ENCODE measurements at regions of chr15 and their contacts with region 1.

Region 1: DNA sequence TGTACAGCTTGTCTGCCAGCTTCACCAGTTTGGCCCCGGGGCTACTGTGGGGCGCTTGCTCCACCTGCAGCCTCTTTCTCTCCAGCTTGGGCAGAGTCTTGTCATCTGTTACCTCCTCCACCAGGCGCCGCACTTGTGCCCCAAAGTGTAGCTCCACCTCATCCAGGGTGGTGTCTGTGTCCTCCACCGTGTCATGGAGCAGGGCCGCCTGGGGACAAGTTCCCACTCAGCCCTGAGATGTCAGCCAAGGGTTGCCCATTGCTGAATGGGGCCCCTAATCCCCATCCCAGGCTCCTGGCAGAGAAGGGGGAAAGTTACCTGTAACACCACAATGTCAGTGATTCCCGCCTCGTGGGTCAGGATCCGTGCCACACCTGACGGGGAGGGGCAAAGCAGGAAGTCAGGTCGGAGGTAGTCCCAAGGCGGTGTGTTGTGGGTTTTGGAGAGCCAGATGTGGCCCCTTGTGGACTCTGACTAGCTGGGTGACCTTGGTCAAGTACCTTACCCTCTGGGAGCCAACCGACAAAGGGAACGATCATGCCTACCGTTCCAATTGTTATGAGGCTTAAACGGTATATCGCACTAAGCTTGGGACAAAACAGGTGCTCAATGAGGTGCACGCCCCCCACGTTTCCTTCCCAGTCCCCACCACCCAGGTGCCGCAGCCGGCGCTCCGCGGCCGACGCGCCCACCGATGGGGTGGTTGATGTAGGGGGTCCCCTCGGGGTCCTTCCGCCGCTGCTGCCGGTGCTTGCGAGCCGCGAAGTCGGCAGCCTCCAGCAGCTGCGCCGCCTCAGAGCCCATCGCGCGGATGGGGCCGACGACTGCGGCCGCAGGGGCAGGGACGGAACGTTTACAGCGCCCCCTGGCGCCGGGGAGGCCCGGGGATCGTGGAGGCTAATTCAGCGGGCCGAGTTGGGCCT is at the start of gene HDDC3:
- DNase-seq: peak; percentile 90

Region 2: DNA sequence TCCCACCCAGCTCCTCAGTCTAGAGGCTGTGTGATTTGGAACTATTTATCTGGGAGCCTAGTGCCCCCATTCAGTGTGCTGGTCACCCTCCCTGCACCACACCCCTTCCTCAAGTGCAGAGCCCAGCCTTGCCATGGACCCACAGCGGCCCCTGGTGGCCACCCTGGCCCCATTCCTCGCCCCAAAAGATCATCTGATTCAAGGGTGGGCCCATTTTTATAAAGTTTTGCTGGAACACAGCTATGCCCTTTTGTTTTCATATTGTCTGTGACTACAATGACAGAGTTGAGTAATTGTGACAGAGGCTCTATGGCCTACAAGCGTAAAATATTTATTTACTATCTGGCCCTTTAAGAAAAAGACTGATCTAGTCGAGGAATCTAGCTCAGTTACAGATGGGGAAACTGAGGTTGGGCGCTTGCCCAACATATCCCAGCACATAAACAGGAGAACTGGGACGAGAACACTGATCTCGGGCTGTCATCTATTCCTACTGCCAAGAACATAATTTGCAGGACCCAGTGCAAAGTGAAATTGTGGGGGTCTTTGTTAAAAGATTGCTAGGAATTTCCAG is 45.9 kb before region 1 on chr15:
- CTCF ChIA-PET with region 1: interaction called, 12 read pairs
- POLR2A ChIA-PET with region 1: interaction called, 4 read pairs
- DNase-seq: peak; percentile 82

Region 3: DNA sequence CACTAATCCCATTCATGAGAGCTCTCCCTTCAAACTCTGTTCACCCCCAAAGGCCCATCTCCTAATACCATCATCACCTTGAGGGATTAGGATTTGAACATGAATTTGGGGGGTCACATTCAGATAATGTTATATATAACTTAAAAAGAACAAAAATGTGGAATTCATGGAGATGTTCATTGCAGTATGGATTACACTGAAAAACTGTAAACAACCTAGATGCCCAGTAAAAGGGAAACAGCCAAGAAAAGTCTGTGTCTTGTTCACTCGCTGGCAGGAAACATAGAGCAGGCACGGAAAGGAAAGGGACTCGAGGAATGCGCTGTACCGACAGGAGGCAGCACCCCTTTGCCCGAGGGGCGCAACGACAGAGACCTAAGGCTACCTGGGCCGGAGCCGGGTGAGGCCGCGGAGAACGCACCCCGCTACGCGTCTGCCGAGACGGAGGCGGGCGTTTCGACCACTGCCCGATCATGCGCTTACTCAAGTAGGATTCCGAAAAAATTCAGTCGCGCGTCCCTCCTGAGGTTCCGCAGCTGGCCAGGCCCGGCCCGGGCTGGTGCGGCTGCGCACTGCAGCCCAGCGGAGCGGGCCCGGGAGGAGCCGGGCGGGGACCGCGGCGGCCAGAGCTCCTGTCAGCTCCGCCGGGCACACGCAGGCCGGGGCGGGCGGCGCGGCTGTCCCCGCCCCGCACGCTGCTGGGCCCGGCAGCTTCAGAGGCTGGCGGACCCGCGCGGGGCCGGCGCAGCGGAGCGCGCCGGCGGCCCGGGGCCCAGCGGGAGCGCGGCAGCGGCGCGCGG is 29.8 kb before region 1 on chr15:
- CTCF ChIA-PET with region 1: interaction called, 57 read pairs
- POLR2A ChIA-PET with region 1: interaction called, 142 read pairs
- DNase-seq: peak; percentile 96

Region 4: DNA sequence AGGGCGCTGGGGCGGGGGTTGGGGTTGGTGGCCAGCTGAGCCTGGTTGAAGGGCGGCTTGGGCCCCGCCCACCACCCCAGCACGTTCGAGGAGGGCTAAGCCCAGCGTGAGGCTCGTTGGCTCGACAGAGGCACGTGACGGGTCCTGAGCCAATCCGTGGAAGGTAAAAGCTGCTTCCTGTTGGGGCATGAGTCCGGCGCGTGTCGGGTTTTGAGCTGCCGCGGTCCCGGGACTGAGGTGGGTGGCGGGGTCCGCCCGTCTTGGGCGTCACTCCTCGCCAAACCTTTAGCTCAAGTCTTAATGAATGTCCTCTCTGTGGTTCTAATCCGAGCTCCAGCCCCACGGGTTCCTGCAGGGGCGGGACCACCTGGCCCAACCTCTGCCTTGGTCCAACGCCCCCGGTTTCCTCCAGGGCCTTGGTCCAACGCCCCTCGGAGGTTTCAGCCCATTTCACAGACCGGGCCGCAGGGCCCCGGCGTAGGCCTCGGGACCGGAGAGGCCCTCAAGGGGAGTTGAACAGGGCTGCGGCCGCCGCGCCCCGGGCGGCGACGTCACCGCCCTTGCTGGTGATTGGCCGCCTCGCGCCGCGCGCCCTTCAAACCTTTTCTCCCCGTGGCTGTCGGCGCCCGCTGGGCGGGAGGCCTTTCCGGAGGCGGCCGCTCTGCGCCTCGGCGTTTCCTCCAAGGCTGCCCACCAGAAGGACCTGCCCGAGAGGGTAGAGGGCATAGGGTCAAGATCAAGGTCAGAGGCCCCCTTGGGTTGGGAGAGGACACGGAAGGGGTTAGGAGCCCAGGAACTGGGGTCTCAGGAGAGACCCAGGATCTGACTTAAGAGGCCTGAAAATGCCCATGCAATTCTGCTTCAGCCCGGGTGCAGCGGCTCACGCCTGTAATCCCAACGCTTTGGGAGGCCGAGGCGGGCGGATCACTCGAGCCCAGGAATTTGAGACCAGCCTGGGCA is 23.0 kb after region 1 on chr15 and contains the start of gene RCCD1:
- CTCF ChIA-PET with region 1: interaction called, 77 read pairs
- POLR2A ChIA-PET with region 1: interaction called, 60 read pairs
- DNase-seq: peak; percentile 98

Region 5: DNA sequence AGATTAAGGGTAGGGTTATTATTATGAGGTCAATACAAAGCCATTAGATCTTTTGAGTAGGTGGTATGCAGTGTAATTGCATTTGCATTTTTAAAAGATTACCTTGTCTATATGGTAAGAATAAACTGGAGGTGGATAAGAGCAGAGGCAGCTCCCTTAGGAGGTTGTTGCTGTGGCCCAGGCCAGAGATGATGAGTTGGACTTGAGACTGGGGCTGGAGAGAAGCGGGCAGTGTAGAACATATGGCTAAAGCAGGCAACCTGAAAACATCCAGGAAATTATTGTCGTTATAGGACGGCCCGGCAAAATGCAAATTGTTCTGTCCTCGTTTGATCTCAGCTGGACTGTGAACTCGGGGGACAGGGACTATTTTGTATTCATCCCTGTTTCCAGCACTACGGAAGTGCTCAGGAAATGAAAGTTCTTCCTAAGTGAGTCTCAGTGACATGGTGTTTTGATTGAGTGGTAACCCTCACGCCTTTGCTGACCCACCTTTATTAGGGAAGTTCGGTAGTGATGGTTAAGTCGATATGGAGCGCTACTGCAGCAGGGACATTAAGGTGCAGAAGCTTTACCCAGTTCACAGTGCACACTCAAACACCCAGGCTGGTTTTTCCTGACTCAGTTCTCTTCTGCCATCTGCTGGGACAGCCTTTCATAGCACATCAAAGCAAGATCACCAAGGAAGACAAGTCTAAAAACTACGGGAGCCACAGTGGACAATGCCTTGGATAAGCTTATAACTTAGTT is 117.6 kb after region 1 on chr15:
- CTCF ChIA-PET with region 1: interaction called, 30 read pairs
- POLR2A ChIA-PET with region 1: interaction called, 16 read pairs
- DNase-seq: peak; percentile 59

Measured in HEK293T (cell line).